ENCODE measurements at regions of chr9 and their contacts with region 1.

Region 1: DNA sequence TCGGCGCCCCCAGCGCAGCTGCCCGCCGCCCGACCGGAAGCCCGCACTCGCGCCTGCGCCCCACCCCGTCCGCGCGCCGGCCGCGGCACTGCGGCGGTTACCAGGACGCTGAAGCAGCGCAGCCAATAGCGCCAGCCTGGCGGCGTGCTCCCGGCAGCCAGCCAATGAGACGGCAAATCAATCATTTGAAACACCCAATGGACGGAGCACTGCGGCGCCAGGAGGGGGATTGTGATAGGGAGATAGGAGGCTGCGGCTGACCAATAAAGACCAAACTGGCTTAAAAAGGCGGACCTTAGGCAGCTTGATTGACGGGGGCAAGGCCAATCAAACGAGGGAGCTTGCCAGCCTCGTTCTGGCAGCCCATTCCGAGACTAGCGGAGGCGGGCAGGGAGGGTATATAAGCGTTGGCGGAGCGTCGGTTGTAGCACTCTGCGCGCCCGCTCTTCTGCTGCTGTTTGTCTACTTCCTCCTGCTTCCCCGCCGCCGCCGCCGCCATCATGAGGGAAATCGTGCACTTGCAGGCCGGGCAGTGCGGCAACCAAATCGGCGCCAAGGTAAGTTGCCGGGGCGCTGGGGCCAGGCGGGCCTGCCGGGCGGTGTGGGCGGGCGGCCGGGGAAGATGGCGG is at the start of gene TUBB4B:
- DNase-seq: peak; percentile 98 to 100
- H3K4me3 ChIP-seq: peak within 1 kb of the TSS; percentile 80
- H3K4me3 Mint-ChIP-seq: peak within 1 kb of the TSS; percentile 80
- H3K27ac Mint-ChIP-seq: peak within 1 kb of the TSS; percentile 95
- H3K4me1 ChIP-seq: peaks cover 28% of the 10 kb centered on the region
- H3K4me1 Mint-ChIP-seq: peaks cover 7% of the 10 kb centered on the region
- H3K27me3 ChIP-seq: no peaks in the 10 kb centered on the region
- H3K27me3 Mint-ChIP-seq: peaks cover 3% of the 10 kb centered on the region
- CTCF ChIP-seq: no peak
- total RNA-seq, gene TUBB4B: 481 and 487 TPM in 2 replicates

Region 2: DNA sequence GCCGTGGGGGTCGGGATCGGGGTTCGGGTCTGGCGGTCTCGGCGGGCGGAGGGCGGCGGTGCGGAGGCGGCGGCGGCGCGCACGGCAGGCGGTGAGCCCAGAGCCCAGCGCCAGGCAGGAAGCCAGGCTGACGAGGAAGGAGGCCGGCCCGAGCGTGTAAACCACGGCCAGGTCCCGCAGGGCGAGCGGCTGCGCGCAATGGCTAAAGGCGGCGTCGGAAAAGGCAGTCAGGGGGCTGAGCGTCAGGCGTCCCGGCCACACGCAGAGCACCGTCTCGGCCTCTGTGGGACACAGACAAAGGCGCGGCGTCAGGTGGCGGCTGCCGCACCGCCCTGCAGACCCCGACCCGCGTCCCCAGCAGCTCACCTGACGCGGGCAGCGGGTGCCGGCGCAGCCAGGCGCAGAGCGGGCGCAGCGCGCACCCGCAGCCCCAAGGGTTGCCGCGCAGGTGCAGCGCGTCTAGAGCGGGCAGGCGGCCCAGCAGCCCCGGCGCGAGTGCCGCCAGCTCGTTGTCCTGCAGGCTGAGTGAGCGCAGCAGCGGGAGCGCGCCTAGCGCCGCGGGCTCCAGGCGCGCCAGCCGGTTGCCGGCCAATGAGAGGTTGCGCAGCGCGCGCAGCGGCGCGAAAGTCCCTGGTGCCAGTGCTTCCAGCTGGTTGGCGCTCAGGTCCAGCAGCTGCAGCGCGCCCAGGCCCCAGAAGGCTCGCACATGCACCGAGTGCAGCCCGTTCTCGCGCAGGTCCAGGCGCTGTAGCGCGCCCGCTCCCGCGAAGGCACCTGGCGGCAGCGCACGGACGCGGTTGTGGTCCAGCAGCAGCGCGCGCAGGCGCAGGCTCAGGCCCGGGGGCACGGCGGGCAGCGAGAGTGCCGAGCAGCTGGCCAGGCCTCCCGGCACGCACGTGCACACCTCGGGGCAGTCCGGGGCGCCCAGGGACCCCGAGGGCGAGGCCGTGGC is 71.8 kb before region 1 on chr9:
- CTCF ChIA-PET with region 1: interaction called, 16 read pairs
- POLR2A ChIA-PET with region 1: interaction called, 3 read pairs
- intact Hi-C with region 1: no loop called
- DNase-seq: peak; percentile 75 to 76
- H3K4me3 ChIP-seq: peak overlapping the region; percentile 74
- H3K4me3 Mint-ChIP-seq: peak overlapping the region; percentile 79
- H3K27ac Mint-ChIP-seq: no peak overlapping the region
- H3K4me1 ChIP-seq: peaks cover 13% of the 10 kb centered on the region
- H3K4me1 Mint-ChIP-seq: peaks cover 6% of the 10 kb centered on the region
- H3K27me3 ChIP-seq: peaks cover 2% of the 10 kb centered on the region; the same call in 1 of the 2 replicates
- H3K27me3 Mint-ChIP-seq: peaks cover 4% of the 10 kb centered on the region
- CTCF ChIP-seq: no peak

Region 3: DNA sequence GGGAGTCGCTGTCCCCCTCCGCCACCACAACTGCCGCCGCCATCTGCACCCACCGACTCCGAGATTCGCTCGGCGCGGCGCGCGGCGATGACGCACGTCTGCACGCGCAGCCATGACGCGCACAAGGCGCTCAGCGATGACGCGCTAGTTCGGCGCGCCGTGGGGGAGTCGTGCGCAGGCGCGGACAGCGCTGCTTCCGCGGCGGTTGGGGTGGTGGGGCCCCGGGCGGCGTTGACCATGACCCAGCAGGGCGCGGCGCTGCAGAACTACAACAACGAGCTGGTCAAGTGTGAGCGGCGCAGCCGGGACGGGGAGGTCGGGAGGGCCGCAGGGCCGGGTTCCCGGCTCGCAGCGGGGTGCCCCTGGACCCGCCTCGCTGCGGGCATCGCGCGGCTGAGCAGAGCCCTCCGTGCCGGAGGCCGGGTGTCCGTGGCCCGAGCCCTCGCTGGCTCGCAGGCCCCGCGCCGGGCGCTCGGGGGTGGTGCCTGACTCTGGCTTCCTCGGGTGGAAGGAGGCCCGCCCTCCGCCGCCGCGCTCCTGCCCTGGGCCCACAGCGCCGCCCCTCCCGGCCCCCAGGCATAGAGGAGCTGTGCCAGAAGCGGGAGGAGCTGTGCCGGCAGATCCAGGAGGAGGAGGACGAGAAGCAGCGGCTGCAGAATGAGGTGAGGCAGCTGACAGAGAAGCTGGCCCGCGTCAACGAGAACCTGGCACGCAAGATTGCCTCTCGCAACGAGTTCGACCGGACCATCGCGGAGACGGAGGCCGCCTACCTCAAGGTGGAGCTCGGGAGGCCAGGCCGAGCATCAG is 52.3 kb before region 1 on chr9 and contains the starts of genes ANAPC2 and SSNA1:
- CTCF ChIA-PET with region 1: interaction called, 22 read pairs
- POLR2A ChIA-PET with region 1: interaction called, 10 read pairs
- intact Hi-C with region 1: no loop called
- DNase-seq: peak; percentile 93 to 97
- H3K4me3 ChIP-seq: peak within 1 kb of the TSS; percentile 96
- H3K4me3 Mint-ChIP-seq: peak within 1 kb of the TSS; percentile 98
- H3K27ac Mint-ChIP-seq: peak within 1 kb of the TSS; percentile 93
- H3K4me1 ChIP-seq: peaks cover 16% of the 10 kb centered on the region
- H3K4me1 Mint-ChIP-seq: peaks cover 20% of the 10 kb centered on the region
- H3K27me3 ChIP-seq: no peaks in the 10 kb centered on the region
- H3K27me3 Mint-ChIP-seq: no peaks in the 10 kb centered on the region
- CTCF ChIP-seq: peak; percentile 38 to 56
- total RNA-seq, gene ANAPC2: 66.8 and 67.5 TPM in 2 replicates
- total RNA-seq, gene SSNA1: 62.3 and 62.7 TPM in 2 replicates

Region 4: DNA sequence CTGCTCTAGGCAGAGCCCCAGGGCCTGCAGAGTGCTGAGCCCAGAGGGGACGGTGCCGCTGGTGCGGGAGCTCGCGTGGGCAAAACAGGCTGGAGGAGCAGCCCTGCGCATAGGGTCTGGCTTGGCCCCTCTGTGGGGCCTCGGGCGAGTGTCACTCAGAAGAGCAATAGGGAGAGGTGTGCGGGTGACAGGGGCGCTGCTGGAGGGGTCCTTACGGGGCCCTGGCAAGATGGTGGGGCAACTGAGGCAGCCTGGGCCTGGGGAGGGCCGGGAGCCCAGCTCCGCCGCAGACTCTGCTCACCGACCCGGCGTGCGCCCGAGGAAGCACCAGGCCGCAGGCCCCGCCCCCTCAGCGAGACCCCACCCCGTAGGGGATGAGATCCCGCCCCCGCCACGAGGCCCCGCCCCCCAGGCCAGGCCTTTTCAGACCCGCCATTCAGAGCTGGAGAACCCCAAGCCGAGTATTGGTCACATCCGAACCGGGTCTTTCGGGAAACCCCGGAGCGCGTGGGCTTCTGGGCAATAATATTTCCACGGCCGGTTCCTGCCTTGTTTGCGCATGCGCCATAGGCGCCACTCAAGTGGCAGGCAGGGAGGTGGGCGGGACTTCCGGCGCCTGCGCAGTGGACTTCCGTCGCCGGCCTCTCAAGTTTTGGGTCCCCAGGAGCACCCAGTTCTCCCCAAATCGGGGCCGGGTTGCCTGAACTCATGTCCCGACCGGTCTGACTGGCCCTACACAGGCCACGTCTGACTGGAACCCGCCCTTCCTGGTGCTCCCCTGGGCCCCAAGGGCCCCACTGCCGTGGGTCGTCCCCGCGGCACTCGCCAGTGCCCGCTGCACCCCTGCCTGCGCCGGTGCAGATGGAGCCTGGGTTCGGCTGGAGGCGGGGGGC is 17.7 kb before region 1 on chr9:
- CTCF ChIA-PET with region 1: interaction called, 27 read pairs
- POLR2A ChIA-PET with region 1: interaction called, 27 read pairs
- intact Hi-C with region 1: loop called (anchors 1 kb)
- DNase-seq: peak; percentile 97 to 99
- H3K4me3 ChIP-seq: peak overlapping the region; percentile 69
- H3K4me3 Mint-ChIP-seq: peak overlapping the region; percentile 85
- H3K27ac Mint-ChIP-seq: no peak overlapping the region
- H3K4me1 ChIP-seq: peaks cover 21% of the 10 kb centered on the region
- H3K4me1 Mint-ChIP-seq: peaks cover 13% of the 10 kb centered on the region
- H3K27me3 ChIP-seq: no peaks in the 10 kb centered on the region
- H3K27me3 Mint-ChIP-seq: no peaks in the 10 kb centered on the region
- CTCF ChIP-seq: no peak

Region 5: GRCh38 chr9:137280474-137281344 is 39.7 kb after region 1 on chr9:
- CTCF ChIA-PET with region 1: no interaction called
- POLR2A ChIA-PET with region 1: no interaction called
- intact Hi-C with region 1: no loop called
- DNase-seq: no peak
- H3K4me3 ChIP-seq: no peak overlapping the region
- H3K4me3 Mint-ChIP-seq: no peak overlapping the region
- H3K27ac Mint-ChIP-seq: no peak overlapping the region
- H3K4me1 ChIP-seq: no peaks in the 10 kb centered on the region
- H3K4me1 Mint-ChIP-seq: no peaks in the 10 kb centered on the region
- H3K27me3 ChIP-seq: no peaks in the 10 kb centered on the region
- H3K27me3 Mint-ChIP-seq: no peaks in the 10 kb centered on the region
- CTCF ChIP-seq: no peak

Region 6: DNA sequence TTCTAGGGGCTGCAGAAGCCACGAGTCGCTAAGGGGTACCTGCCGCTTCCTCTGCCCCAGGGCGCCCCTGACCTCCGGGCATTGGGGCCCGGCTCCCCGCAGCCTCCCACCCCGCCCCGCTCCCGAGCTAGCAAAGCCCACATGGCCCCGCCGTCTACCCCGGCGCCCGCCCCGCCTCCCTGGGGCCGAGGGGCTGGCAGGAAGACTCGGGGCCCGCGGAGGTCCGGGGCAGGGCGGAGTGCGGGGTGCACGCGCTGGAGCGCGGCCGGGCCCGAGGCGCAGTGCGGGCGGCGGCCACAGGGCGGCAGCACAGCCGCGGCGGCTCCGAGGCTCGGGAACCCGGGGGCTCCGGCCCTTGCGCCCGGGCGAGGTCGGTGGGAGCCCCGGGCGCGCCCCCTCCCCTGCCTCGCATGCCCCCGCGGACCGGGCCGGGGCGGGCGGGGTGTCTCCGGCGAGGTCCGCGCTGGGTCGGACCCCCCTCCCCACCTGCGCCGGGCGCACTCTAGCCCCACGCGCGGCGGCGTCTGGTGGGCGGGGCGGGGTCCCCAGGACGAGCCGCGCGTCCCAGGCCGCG is 54.4 kb after region 1 on chr9:
- CTCF ChIA-PET with region 1: interaction called, 9 read pairs
- POLR2A ChIA-PET with region 1: interaction called, 9 read pairs
- intact Hi-C with region 1: loop called (anchors 5 kb)
- DNase-seq: peak in 1 of 2 experiments; percentile 81
- H3K4me3 ChIP-seq: peak overlapping the region; percentile 42
- H3K4me3 Mint-ChIP-seq: peak overlapping the region; percentile 74
- H3K27ac Mint-ChIP-seq: peak overlapping the region; percentile 98
- H3K4me1 ChIP-seq: peaks cover 30% of the 10 kb centered on the region
- H3K4me1 Mint-ChIP-seq: peaks cover 7% of the 10 kb centered on the region
- H3K27me3 ChIP-seq: no peaks in the 10 kb centered on the region
- H3K27me3 Mint-ChIP-seq: no peaks in the 10 kb centered on the region
- CTCF ChIP-seq: peak in 1 of 2 experiments; percentile 51